ENCODE measurements at regions of chr18 and their contacts with region 1.

Region 1: DNA sequence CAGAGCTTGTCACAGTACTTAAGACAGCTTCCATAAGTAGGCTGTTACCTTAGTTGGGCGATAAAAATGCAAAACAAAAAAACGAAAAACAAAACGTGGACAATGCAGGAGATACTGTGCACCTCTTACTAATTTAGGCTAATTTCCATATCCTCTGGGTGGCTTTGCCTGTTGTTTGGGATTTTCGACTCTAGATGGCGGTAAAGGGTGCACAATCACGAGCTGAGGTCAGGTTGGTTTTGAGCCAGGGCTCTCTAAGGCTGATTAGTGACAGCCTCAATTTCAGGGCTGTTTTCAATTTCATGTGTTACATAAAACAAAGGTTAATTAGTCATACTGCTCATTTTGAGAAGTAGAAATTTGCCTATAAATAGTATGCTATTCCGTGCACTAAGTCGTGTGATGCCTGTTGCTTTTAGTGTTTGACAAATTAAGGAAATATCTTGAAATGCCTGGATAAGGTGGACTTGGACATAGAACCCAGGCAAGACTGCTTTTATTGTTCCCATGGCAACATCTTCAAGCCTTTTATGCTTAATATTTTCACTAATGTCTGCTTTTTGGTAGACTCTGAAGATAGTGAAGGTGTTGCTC is 493.1 kb downstream of the SOCS6 start:
- DNase-seq: peak; percentile 72
- H3K4me3 ChIP-seq: no peak overlapping the region
- H3K27ac ChIP-seq: no peak overlapping the region
- H3K4me1 ChIP-seq: no peaks in the 10 kb centered on the region
- H3K27me3 ChIP-seq: no peaks in the 10 kb centered on the region
- CTCF ChIP-seq: peak; percentile 72
- POLR2A ChIP-seq: no peak

Region 2: GRCh38 chr18:70762812-70763211 is 19.1 kb before region 1 on chr18:
- CTCF ChIA-PET with region 1: interaction called, 10 read pairs
- POLR2A ChIA-PET with region 1: no interaction called
- dilution Hi-C with region 1: no loop called
- intact Hi-C with region 1: no loop called
- DNase-seq: no peak
- H3K4me3 ChIP-seq: no peak overlapping the region
- H3K27ac ChIP-seq: no peak overlapping the region
- H3K4me1 ChIP-seq: no peaks in the 10 kb centered on the region
- H3K27me3 ChIP-seq: no peaks in the 10 kb centered on the region
- CTCF ChIP-seq: no peak
- POLR2A ChIP-seq: no peak

Region 3: DNA sequence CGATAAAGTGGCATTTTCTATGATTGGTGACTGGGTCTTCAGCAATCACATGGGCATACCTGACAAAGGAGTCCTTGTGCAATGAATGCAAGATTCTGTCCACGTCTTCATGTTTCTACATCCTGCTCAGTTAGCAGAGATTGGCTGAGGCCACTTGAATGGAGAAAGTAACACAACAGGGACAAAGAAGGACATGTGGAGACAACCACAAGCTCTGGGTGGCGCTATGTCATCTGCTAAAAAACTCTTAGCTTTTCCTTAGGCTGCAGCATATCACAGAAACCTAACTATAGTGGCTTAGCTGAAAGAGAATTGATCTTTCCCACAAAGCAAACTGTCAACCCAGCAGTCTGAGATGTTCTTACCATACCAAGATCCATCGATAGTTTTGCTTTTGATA is 616.6 kb after region 1 on chr18:
- CTCF ChIA-PET with region 1: interaction called, 8 read pairs
- POLR2A ChIA-PET with region 1: no interaction called
- dilution Hi-C with region 1: no loop called
- intact Hi-C with region 1: loop called (anchors 1 kb)
- DNase-seq: peak; percentile 35
- H3K4me3 ChIP-seq: no peak overlapping the region
- H3K27ac ChIP-seq: no peak overlapping the region
- H3K4me1 ChIP-seq: no peaks in the 10 kb centered on the region
- H3K27me3 ChIP-seq: no peaks in the 10 kb centered on the region
- CTCF ChIP-seq: peak; percentile 9 to 51
- POLR2A ChIP-seq: no peak

Region 4: GRCh38 chr18:72086421-72086820 is 1304.5 kb after region 1 on chr18:
- CTCF ChIA-PET with region 1: interaction called, 5 read pairs
- POLR2A ChIA-PET with region 1: no interaction called
- dilution Hi-C with region 1: no loop called
- intact Hi-C with region 1: loop called (anchors 1 kb)
- DNase-seq: peak; percentile 39
- H3K4me3 ChIP-seq: no peak overlapping the region
- H3K27ac ChIP-seq: no peak overlapping the region
- H3K4me1 ChIP-seq: no peaks in the 10 kb centered on the region
- H3K27me3 ChIP-seq: no peaks in the 10 kb centered on the region
- CTCF ChIP-seq: peak; percentile 9 to 42
- POLR2A ChIP-seq: no peak

Region 5: DNA sequence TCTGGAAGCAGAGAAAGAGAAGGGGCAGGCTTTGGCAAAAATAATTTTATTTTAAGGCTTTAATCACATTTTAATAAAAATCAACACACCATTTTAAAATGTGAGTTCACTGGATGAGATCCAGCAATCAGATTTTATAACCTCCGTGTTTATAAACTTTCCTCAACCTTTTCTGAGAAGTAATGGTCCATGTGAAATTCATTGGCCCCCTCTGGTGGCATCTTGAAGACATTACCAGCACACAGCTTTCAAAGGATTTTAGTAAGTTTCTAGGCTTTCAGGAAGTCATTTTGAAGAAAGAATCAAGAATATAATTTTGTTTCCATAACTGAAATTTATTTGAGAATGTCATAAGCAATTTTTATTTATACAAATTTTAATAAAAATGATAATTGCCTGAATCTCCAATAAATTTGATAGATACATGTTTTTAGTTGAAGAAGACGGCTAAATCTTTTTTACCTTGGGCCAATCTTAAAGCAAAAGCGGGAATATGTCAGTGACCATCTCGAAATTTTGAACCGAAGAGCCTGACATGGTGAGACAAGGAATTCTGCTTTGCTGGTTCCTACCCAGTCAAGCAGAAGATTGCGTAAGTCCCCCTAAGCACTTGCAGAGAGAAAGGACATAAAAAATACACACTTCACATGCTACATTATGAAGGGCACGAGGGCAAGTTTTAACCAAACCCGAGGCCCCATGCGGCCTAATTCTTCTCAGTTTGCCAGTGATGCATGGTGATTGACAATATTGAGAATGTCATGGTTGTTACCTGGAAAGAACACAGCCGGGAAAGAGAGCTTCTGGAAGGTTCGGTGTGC is 1890.6 kb after region 1 on chr18:
- CTCF ChIA-PET with region 1: interaction called, 3 read pairs
- POLR2A ChIA-PET with region 1: no interaction called
- dilution Hi-C with region 1: no loop called
- intact Hi-C with region 1: loop called (anchors 5 kb)
- DNase-seq: peak; percentile 12
- H3K4me3 ChIP-seq: no peak overlapping the region
- H3K27ac ChIP-seq: no peak overlapping the region
- H3K4me1 ChIP-seq: no peaks in the 10 kb centered on the region
- H3K27me3 ChIP-seq: no peaks in the 10 kb centered on the region
- CTCF ChIP-seq: peak; percentile 36 to 46
- POLR2A ChIP-seq: no peak

Measured in endothelial cell of umbilical vein (primary cell).